ENCODE measurements at regions of chr4 and their contacts with region 1.

Region 1: GRCh38 chr4:15690020-15690809 is 8.6 kb downstream of the FAM200B start:
- DNase-seq: peak; percentile 76 to 96 (median 83)
- H3K4me3 ChIP-seq: peak overlapping the region; percentile 17 to 65 (median 49)
- H3K4me3 Mint-ChIP-seq: peak overlapping the region; percentile 10 to 63
- H3K27ac ChIP-seq: peak overlapping the region; percentile 83 to 85
- H3K27ac Mint-ChIP-seq: peak overlapping the region; percentile 92 to 97 (median 94)
- H3K4me1 ChIP-seq: peaks cover 75 to 94% of the 10 kb centered on the region in 2 donors
- H3K4me1 Mint-ChIP-seq: peaks cover 77% of the 10 kb centered on the region
- H3K27me3 ChIP-seq: no peaks in the 10 kb centered on the region
- H3K27me3 Mint-ChIP-seq: no peaks in the 10 kb centered on the region
- CTCF ChIP-seq: no peak

Region 2: GRCh38 chr4:15655229-15656037 is 34.8 kb before region 1 on chr4 and contains the start of gene FBXL5:
- intact Hi-C with region 1: loop called in 1 of 2 experiments (anchors 5 kb)
- DNase-seq: peak; percentile 77 to 90 (median 86)
- H3K4me3 ChIP-seq: peak within 1 kb of the TSS; percentile 72 to 98 (median 95)
- H3K4me3 Mint-ChIP-seq: peak within 1 kb of the TSS; percentile 99 to 100
- H3K27ac ChIP-seq: peak within 1 kb of the TSS; percentile 97 to 100
- H3K27ac Mint-ChIP-seq: peak within 1 kb of the TSS; percentile 97 to 99 (median 99)
- H3K4me1 ChIP-seq: peaks cover 58 to 83% of the 10 kb centered on the region in 2 donors
- H3K4me1 Mint-ChIP-seq: peaks cover 64% of the 10 kb centered on the region
- H3K27me3 ChIP-seq: no peaks in the 10 kb centered on the region
- H3K27me3 Mint-ChIP-seq: no peaks in the 10 kb centered on the region
- CTCF ChIP-seq: no peak
- polyA plus RNA-seq, gene FBXL5: 172 to 518 (median 484) TPM